PC-9 (cell line): ENCODE measurements at regions of chr11 and their contacts with region 1.

Region 1: GRCh38 chr11:9565822-9566560 is 7.5 kb upstream of the WEE1 start:
- DNase-seq: peak; percentile 76 to 99
- H3K4me3 ChIP-seq: peak overlapping the region; percentile 16; the same call in 1 of the 2 replicates
- H3K27ac ChIP-seq: peak overlapping the region; percentile 98
- H3K4me1 ChIP-seq: peaks cover 80% of the 10 kb centered on the region
- H3K27me3 ChIP-seq: no peaks in the 10 kb centered on the region
- CTCF ChIP-seq: no peak

Region 2: GRCh38 chr11:9460322-9461067 is 105.5 kb before region 1 on chr11 and contains the start of gene ZNF143:
- CTCF ChIA-PET with region 1: no interaction called
- POLR2A ChIA-PET with region 1: interaction called, 14 read pairs
- intact Hi-C with region 1: loop called (anchors 2 kb)
- DNase-seq: peak; percentile 97
- H3K4me3 ChIP-seq: peak within 1 kb of the TSS; percentile 88
- H3K27ac ChIP-seq: peak within 1 kb of the TSS; percentile 96
- H3K4me1 ChIP-seq: peaks cover 22% of the 10 kb centered on the region
- H3K27me3 ChIP-seq: no peaks in the 10 kb centered on the region
- CTCF ChIP-seq: no peak
- total RNA-seq, gene ZNF143: 14.7 and 16.5 TPM in 2 replicates

Region 3: GRCh38 chr11:9739895-9740886 is 174.2 kb after region 1 on chr11:
- CTCF ChIA-PET with region 1: no interaction called
- POLR2A ChIA-PET with region 1: interaction called, 10 read pairs
- intact Hi-C with region 1: no loop called
- DNase-seq: no peak
- H3K4me3 ChIP-seq: no peak overlapping the region
- H3K27ac ChIP-seq: peak overlapping the region; percentile 12; the same call in 1 of the 2 replicates
- H3K4me1 ChIP-seq: no peaks in the 10 kb centered on the region
- H3K27me3 ChIP-seq: no peaks in the 10 kb centered on the region
- CTCF ChIP-seq: no peak